ENCODE measurements at regions of chr6 and their contacts with region 1.

Region 1: GRCh38 chr6:6008648-6009421 is 2.1 kb upstream of the NRN1 start:
- H3K4me3 Mint-ChIP-seq: peak overlapping the region; percentile 75
- H3K27ac Mint-ChIP-seq: peak overlapping the region; percentile 59
- H3K4me1 Mint-ChIP-seq: peaks cover 46% of the 10 kb centered on the region
- H3K27me3 Mint-ChIP-seq: peaks cover 90% of the 10 kb centered on the region

Region 2: GRCh38 chr6:5471044-5471443 is 537.8 kb before region 1 on chr6:
- intact Hi-C with region 1: loop called (anchors 10 kb)
- H3K4me3 Mint-ChIP-seq: no peak overlapping the region
- H3K27ac Mint-ChIP-seq: no peak overlapping the region
- H3K4me1 Mint-ChIP-seq: peaks cover 3% of the 10 kb centered on the region
- H3K27me3 Mint-ChIP-seq: no peaks in the 10 kb centered on the region

Measured in dendritic cell treated with granulocyte-macrophage colony-stimulating factor and Interleukin-4, amounts not matched to agents 40 ng/mL and 50 ng/mL, for 4 days (primary cell).